HEK293T (cell line): ENCODE measurements at regions of chr19 and their contacts with region 1.

Region 1: GRCh38 chr19:55599468-55600279 is at the start of gene FIZ1:
- DNase-seq: peak; percentile 79

Region 2: DNA sequence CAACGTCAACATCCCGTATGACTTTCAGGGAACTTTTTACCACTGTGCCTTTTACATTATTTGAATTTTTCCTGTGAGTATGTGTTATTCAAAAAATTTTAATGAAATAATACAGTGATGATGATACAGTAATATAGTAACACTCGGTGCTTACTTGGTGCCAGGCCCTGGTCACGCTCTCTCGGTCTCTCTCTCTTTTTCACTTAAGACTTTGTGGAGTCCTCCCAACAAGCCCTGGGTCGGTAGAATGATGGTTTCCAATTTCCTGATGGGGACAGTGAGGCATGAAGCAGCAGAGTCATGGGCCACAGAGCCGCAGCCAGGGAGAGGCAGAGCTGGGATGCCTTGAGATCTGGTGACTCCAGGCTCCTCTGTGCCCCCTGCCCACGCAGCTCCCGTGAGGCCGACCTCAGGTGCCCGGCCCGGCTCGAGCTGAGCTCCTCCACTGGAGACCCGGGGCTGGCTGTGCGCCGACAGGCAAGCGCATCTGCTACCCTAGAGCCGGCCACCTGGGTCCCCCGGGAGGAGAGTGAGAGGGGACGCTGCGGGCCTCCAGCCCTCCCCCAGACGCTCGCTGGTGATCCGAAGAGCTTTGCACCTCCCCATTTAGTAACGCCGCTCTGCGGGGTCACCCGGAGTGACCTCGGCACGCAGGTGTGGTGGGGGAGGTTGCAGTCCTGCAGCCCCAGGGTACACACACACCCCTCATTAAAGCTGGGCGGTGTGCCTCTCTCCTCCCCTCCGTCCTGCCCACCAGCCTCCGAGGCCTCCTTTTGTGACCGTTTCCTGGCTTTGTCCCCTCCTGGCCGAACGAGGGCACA is 50.0 kb before region 1 on chr19:
- CTCF ChIA-PET with region 1: interaction called, 6 read pairs
- POLR2A ChIA-PET with region 1: interaction called, 11 read pairs
- DNase-seq: no peak

Region 3: DNA sequence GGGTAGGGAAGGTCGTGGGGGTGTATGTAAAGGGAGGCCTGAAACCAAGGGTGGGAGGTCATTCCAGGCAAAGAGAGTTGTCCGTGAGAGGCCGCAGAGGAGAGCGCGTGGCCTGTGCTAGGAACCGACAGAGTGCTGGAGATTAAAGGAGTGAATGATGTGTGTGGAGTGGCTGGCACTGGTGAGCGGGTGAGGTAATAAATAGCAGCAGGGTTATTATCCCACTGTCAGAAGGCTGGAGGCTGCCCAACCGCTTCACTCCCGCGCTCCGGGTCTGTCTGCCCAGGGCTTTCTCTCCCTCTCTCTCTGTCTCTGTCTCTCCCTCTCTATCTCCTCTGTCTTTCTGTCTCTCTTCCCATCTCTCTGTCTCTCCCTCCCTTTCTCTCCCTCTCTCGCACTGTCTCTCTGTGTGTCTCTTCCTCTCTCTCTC is 36.4 kb before region 1 on chr19:
- CTCF ChIA-PET with region 1: no interaction called
- POLR2A ChIA-PET with region 1: no interaction called
- DNase-seq: no peak

Region 4: GRCh38 chr19:55580628-55581144 is 19.0 kb before region 1 on chr19 and contains the start of gene ZNF579:
- CTCF ChIA-PET with region 1: no interaction called
- POLR2A ChIA-PET with region 1: interaction called, 26 read pairs
- DNase-seq: peak; percentile 83

Region 5: GRCh38 chr19:55586976-55587668 is 12.6 kb before region 1 on chr19:
- CTCF ChIA-PET with region 1: interaction called, 3 read pairs
- POLR2A ChIA-PET with region 1: interaction called, 29 read pairs
- DNase-seq: peak; percentile 96